Endothelial cell of umbilical vein (primary cell): ENCODE measurements at regions of chr9 and their contacts with region 1.

Region 1: DNA sequence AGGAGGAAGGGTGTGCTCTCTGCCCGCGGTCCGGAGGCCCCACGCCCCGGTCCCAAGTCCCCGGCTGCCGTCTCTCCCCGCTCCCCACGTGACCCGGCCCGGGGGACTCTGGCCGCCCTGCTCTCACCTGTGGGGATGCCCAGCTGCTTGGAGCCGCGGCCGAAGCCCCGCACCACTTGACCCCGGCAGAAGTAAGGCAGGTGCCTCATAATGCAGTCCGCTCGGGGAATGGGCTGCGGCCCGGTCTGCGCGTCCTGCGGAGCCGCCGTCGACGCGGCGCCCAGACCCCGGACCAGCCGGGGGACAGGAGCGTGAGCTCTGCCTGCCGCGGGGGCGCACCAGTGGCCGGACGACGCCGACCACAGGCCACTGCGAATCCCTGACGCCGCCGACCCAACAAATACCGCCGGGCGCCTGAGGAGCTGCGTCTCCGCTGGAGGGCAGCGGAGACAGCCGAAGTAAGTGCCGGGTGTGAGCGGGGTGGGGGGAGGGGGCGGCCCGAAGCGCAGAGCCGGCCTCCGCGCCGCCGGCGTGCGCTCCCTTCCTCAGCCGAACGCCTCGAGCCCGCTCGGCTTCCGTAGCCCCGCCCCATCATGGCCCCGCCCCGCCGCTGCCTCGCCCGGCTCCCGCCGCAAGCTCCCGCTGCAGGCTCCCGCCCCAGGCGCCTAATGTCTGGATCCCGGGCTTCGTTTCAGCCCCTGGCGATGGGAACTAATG is at the start of gene RFK:
- DNase-seq: peak; percentile 95
- H3K4me3 ChIP-seq: peak within 1 kb of the TSS; percentile 49 to 87 (median 77)
- H3K27ac ChIP-seq: peak within 1 kb of the TSS; percentile 95
- H3K4me1 ChIP-seq: peaks cover 23% of the 10 kb centered on the region
- H3K27me3 ChIP-seq: no peaks in the 10 kb centered on the region
- CTCF ChIP-seq: peak; percentile 17 to 46
- POLR2A ChIP-seq: peak; percentile 89
- total RNA-seq, gene RFK: 32.9 and 39.7 TPM in 2 replicates

Region 2: GRCh38 chr9:75890472-75891276 is 503.4 kb before region 1 on chr9 and contains the start of gene PCSK5:
- CTCF ChIA-PET with region 1: interaction called, 3 read pairs
- POLR2A ChIA-PET with region 1: interaction called, 3 read pairs
- dilution Hi-C with region 1: no loop called
- intact Hi-C with region 1: loop called (anchors 5 kb)
- DNase-seq: peak; percentile 94
- H3K4me3 ChIP-seq: peak within 1 kb of the TSS; percentile 66 to 90 (median 87)
- H3K27ac ChIP-seq: peak within 1 kb of the TSS; percentile 39
- H3K4me1 ChIP-seq: peaks cover 18% of the 10 kb centered on the region
- H3K27me3 ChIP-seq: peaks cover 0 to 6% of the 10 kb centered on the region in 2 experiments
- CTCF ChIP-seq: peak; percentile 7 to 41
- POLR2A ChIP-seq: peak; percentile 71
- total RNA-seq, gene PCSK5: 4.8 and 5.1 TPM in 2 replicates

Region 3: GRCh38 chr9:76369583-76369982 is 24.5 kb before region 1 on chr9:
- CTCF ChIA-PET with region 1: interaction called, 10 read pairs
- POLR2A ChIA-PET with region 1: interaction called, 5 read pairs
- dilution Hi-C with region 1: no loop called
- intact Hi-C with region 1: no loop called
- DNase-seq: peak; percentile 69
- H3K4me3 ChIP-seq: no peak overlapping the region
- H3K27ac ChIP-seq: no peak overlapping the region
- H3K4me1 ChIP-seq: peaks cover 10% of the 10 kb centered on the region
- H3K27me3 ChIP-seq: no peaks in the 10 kb centered on the region
- CTCF ChIP-seq: no peak
- POLR2A ChIP-seq: no peak

Region 4: GRCh38 chr9:76414656-76415055 is 20.5 kb after region 1 on chr9:
- CTCF ChIA-PET with region 1: interaction called, 6 read pairs
- POLR2A ChIA-PET with region 1: no interaction called
- dilution Hi-C with region 1: no loop called
- intact Hi-C with region 1: loop called (anchors 1 kb)
- DNase-seq: peak; percentile 88
- H3K4me3 ChIP-seq: no peak overlapping the region
- H3K27ac ChIP-seq: peak overlapping the region; percentile 76
- H3K4me1 ChIP-seq: peaks cover 30% of the 10 kb centered on the region
- H3K27me3 ChIP-seq: no peaks in the 10 kb centered on the region
- CTCF ChIP-seq: no peak
- POLR2A ChIP-seq: no peak

Region 5: GRCh38 chr9:76658535-76659231 is 264.6 kb after region 1 on chr9:
- CTCF ChIA-PET with region 1: interaction called, 12 read pairs
- POLR2A ChIA-PET with region 1: no interaction called
- dilution Hi-C with region 1: no loop called
- intact Hi-C with region 1: loop called (anchors 2 kb)
- DNase-seq: peak; percentile 79
- H3K4me3 ChIP-seq: no peak overlapping the region
- H3K27ac ChIP-seq: no peak overlapping the region
- H3K4me1 ChIP-seq: peaks cover 51% of the 10 kb centered on the region
- H3K27me3 ChIP-seq: no peaks in the 10 kb centered on the region
- CTCF ChIP-seq: peak; percentile 37 to 54
- POLR2A ChIP-seq: no peak